Activated T-helper 2 cell treated with anti-CD3 and anti-CD28 coated beads, Interferon-gamma antibody, Interleukin-2, Interleukin-4, amounts not matched to agents 10 μg/mL and 5 μg/mL and 100 μg/mL, durations not matched to agents 14 hours and 24 hours and 36 hours (primary cell): ENCODE measurements at regions of chr3 and their contacts with region 1.

Region 1: DNA sequence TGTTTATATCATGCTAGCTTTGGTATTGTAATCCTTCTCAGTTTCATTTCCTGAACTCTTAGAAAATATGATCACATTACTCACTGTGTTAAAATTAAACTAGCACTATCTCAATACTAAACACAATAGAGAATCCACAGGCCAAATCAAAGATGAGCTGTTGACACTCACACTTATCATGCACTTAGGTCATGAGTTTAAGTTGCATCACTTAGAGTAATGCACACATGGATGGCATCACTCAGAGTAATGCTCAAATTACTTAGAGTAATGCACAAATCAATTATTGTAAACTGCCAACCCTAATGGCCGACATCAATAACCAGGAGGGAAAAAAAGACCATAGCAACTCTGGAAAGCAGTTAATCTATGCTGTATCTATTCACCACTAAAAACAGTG is 40.0 kb upstream of the MCF2L2 start:
- DNase-seq: no peak
- H3K4me3 Mint-ChIP-seq: no peak overlapping the region
- H3K27ac Mint-ChIP-seq: peak overlapping the region; percentile 69
- H3K4me1 Mint-ChIP-seq: peaks cover 17% of the 10 kb centered on the region
- H3K27me3 Mint-ChIP-seq: peaks cover 7% of the 10 kb centered on the region

Region 2: DNA sequence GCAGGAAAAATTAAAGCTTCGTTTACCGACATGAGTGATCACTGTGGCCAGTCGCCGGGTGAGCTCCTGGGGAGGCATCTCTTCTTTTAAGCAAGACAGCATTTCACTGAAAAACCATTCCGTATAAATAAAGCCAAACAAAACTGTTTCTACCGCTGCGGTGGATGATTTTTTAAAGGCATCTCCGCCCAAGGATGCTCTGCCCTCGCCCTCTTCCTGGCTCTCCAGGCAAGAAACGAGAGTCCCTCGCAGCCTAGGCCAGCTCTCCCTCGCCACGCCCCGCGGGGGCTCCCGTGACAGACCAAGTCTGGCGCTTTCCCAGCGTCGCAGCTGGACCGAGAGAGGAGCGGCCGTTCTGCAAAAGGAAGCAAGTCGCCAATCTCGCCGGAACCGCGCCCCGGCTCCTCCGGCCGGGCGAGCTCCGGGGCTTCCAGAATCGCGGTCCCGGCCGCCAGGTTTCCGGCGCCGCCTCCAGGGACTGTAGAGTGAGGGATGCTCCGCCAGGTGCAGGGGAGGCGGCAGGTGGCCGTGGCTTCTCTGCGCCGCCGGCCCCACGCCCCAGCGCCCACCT is 40.5 kb before region 1 on chr3:
- intact Hi-C with region 1: loop called (anchors 1 kb)
- DNase-seq: peak; percentile 24
- H3K4me3 Mint-ChIP-seq: peak overlapping the region; percentile 81
- H3K27ac Mint-ChIP-seq: peak overlapping the region; percentile 14
- H3K4me1 Mint-ChIP-seq: peaks cover 39% of the 10 kb centered on the region
- H3K27me3 Mint-ChIP-seq: peaks cover 8% of the 10 kb centered on the region

Region 3: DNA sequence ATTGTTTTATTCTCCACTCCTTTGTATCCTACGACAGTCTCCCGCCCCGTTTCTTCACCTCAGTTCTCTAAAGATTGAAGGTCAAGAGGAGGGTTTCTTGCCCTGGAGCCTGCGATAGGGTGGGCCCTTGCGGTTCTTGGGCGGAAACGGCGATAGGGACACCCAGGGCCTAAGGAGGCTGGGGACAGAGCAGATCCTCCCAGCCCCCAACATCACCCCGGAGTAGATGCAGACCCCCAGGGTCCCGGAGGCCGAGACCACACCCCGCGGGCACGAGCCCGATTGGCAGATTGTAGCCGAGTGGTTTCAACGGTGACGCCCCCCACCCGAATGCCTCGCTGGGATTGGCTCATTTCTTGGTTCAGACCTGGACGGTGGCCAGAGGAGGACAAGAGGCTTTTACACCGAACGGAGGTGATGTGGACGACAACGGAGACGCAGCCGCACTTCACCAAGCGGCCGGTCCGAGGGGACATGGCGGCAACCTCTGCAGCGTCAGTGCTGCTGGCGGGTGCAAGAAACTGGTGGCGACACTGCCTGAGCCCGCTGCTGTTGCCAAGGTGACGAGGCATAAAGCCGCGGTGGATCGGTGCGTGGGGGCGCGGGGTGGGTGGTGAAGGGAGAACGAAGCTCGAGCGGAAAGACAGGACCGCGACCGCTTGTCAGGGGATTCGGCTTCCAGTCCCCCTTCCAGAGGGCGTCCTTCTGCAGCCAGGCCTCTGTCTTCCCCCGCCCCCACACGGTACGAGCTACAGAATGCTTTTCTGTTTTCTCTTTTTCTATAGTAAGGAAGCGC is 21.0 kb before region 1 on chr3:
- intact Hi-C with region 1: loop called (anchors 1 kb)
- DNase-seq: peak; percentile 78
- H3K4me3 Mint-ChIP-seq: peak overlapping the region; percentile 92
- H3K27ac Mint-ChIP-seq: peak overlapping the region; percentile 83
- H3K4me1 Mint-ChIP-seq: peaks cover 17% of the 10 kb centered on the region
- H3K27me3 Mint-ChIP-seq: peaks cover 9% of the 10 kb centered on the region

Region 4: GRCh38 chr3:183555541-183556081 is 87.2 kb after region 1 on chr3 and contains the start of gene KLHL6:
- intact Hi-C with region 1: loop called (anchors 1 kb)
- DNase-seq: peak; percentile 69
- H3K4me3 Mint-ChIP-seq: peak within 1 kb of the TSS; percentile 100
- H3K27ac Mint-ChIP-seq: peak within 1 kb of the TSS; percentile 100
- H3K4me1 Mint-ChIP-seq: peaks cover 50% of the 10 kb centered on the region
- H3K27me3 Mint-ChIP-seq: no peaks in the 10 kb centered on the region
- total RNA-seq, gene KLHL6: 29.5 and 29.7 TPM in 2 replicates

Region 5: GRCh38 chr3:183697610-183698317 is 229.3 kb after region 1 on chr3 and contains the start of gene YEATS2:
- intact Hi-C with region 1: loop called (anchors 2 kb)
- DNase-seq: peak; percentile 66
- H3K4me3 Mint-ChIP-seq: peak within 1 kb of the TSS; percentile 97
- H3K27ac Mint-ChIP-seq: peak within 1 kb of the TSS; percentile 84
- H3K4me1 Mint-ChIP-seq: peaks cover 29% of the 10 kb centered on the region
- H3K27me3 Mint-ChIP-seq: no peaks in the 10 kb centered on the region
- total RNA-seq, gene YEATS2: 56.7 and 60.1 TPM in 2 replicates

Region 6: GRCh38 chr3:183884427-183885296 is 416.2 kb after region 1 on chr3 and contains the start of gene PARL:
- intact Hi-C with region 1: loop called (anchors 2 kb)
- DNase-seq: peak; percentile 93
- H3K4me3 Mint-ChIP-seq: peak within 1 kb of the TSS; percentile 98
- H3K27ac Mint-ChIP-seq: peak within 1 kb of the TSS; percentile 95
- H3K4me1 Mint-ChIP-seq: peaks cover 25% of the 10 kb centered on the region
- H3K27me3 Mint-ChIP-seq: peaks cover 3% of the 10 kb centered on the region
- total RNA-seq, gene PARL: 74.9 and 81.7 TPM in 2 replicates